K562 (cell line): ENCODE measurements at regions of chr19 and their contacts with region 1.

Region 1: DNA sequence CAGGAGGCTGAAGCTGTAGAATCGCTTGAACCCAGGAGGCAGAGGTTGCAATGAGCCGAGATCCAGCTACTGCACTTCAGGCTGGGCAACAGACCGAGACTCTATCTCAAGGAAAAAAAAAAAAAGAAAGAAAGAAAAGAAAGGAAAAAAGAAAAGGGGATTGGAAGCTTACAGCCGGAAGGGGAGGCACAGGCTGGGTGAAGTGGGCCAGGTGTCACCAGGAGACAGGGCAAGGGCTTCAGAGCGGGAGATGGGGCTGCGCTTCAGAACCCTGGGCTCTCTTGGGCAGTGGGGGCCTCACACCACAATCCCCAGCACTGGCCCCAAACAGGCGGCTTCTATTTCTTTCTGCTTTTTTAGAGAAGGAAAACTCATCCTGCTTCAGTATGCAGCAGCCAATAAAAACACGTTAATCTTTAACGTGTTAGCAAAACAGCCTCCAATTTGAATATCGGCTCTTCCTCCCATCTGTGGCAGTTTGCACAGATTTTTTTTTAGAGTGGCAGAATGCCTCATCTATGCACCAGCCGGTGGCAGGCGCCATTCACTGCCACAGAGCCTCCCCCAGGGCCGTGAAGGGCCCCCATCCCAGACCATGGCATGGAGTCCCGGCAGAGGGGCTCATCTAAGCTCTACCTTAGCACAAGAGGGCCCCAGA is 46.6 kb upstream of the C19orf12 start:
- DNase-seq: no peak
- ATAC-seq: no peak
- H3K4me3 ChIP-seq: no peak overlapping the region
- H3K27ac ChIP-seq: no peak overlapping the region
- H3K4me1 ChIP-seq: peaks cover 0 to 8% of the 10 kb centered on the region in 2 experiments; a peak in 1 of 5 replicates
- H3K27me3 ChIP-seq: peaks cover 21 to 61% of the 10 kb centered on the region in 2 experiments
- CTCF ChIP-seq: no peak
- EP300 ChIP-seq: no peak
- POLR2A ChIP-seq: no peak
- RAD21 ChIP-seq: no peak

Region 2: GRCh38 chr19:29560313-29561075 is 201.2 kb before region 1 on chr19:
- CTCF ChIA-PET with region 1: no interaction called
- POLR2A ChIA-PET with region 1: no interaction called
- in situ Hi-C with region 1: no loop called
- intact Hi-C with region 1: no loop called
- DNase-seq: no peak
- ATAC-seq: no peak
- H3K4me3 ChIP-seq: no peak overlapping the region
- H3K27ac ChIP-seq: no peak overlapping the region
- H3K4me1 ChIP-seq: no peaks in the 10 kb centered on the region
- H3K27me3 ChIP-seq: peaks cover 6 to 30% of the 10 kb centered on the region in 2 experiments; a peak in 4 of 5 replicates
- CTCF ChIP-seq: no peak
- EP300 ChIP-seq: no peak
- POLR2A ChIP-seq: no peak
- RAD21 ChIP-seq: no peak

Region 3: GRCh38 chr19:29690842-29691241 is 70.9 kb before region 1 on chr19:
- CTCF ChIA-PET with region 1: no interaction called
- POLR2A ChIA-PET with region 1: no interaction called
- in situ Hi-C with region 1: no loop called
- intact Hi-C with region 1: no loop called
- DNase-seq: peak; percentile 78 to 89 (median 81)
- ATAC-seq: peak; percentile 80
- H3K4me3 ChIP-seq: no peak overlapping the region
- H3K27ac ChIP-seq: peak overlapping the region; percentile 80
- H3K4me1 ChIP-seq: peaks cover 19 to 26% of the 10 kb centered on the region in 2 experiments; a peak in 4 of 5 replicates
- H3K27me3 ChIP-seq: no peaks in the 10 kb centered on the region
- CTCF ChIP-seq: peak; percentile 76 to 93 (median 82)
- EP300 ChIP-seq: peak; percentile 57; the same call in 1 of the 2 replicates
- POLR2A ChIP-seq: no peak
- RAD21 ChIP-seq: peak; percentile 97 to 99

Region 4: DNA sequence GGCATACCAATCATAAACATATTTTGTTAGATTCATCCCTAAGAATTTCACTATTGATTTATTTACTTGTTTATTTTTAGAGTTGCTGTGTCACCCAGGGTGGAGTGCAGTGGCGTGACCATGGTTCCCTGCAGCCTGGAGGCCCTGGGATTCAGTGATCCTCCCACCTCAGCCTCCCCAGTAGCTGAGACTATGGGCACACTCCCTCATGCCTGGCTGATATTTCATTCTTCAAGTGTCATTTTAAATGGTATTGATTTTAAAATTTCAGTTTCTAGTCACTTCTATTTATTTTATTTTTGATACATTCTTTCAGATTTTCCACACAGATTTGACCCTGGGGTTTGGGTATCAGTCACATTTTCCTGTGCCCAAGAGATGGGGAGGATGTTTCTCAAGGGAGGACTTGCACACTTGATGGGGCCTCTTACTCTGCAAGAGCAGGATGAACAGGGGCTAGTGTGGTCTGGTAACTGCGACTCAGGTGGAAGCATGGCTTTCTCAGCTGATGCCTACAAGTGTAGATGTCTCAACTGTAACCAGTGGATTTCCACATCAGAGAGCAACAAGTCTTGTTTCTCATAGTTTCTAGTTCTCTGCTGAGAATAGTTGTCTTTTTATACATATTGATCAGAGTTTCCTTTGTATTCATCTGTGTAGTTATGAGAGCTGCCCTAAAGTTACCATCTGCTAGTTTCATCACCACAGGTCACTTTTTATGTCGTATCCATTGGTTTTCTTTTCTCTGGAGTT is 90.2 kb after region 1 on chr19:
- CTCF ChIA-PET with region 1: no interaction called
- POLR2A ChIA-PET with region 1: no interaction called
- in situ Hi-C with region 1: loop called (anchors 5 kb)
- intact Hi-C with region 1: no loop called
- DNase-seq: no peak
- ATAC-seq: no peak
- H3K4me3 ChIP-seq: no peak overlapping the region
- H3K27ac ChIP-seq: no peak overlapping the region
- H3K4me1 ChIP-seq: peaks cover 9% of the 10 kb centered on the region in 2 experiments; a peak in 4 of 5 replicates
- H3K27me3 ChIP-seq: peaks cover 0 to 5% of the 10 kb centered on the region in 2 experiments; a peak in 1 of 5 replicates
- CTCF ChIP-seq: no peak
- EP300 ChIP-seq: no peak
- POLR2A ChIP-seq: no peak
- RAD21 ChIP-seq: no peak